OCI-LY7 (cell line): ENCODE measurements at regions of chr6 and their contacts with region 1.

Region 1: DNA sequence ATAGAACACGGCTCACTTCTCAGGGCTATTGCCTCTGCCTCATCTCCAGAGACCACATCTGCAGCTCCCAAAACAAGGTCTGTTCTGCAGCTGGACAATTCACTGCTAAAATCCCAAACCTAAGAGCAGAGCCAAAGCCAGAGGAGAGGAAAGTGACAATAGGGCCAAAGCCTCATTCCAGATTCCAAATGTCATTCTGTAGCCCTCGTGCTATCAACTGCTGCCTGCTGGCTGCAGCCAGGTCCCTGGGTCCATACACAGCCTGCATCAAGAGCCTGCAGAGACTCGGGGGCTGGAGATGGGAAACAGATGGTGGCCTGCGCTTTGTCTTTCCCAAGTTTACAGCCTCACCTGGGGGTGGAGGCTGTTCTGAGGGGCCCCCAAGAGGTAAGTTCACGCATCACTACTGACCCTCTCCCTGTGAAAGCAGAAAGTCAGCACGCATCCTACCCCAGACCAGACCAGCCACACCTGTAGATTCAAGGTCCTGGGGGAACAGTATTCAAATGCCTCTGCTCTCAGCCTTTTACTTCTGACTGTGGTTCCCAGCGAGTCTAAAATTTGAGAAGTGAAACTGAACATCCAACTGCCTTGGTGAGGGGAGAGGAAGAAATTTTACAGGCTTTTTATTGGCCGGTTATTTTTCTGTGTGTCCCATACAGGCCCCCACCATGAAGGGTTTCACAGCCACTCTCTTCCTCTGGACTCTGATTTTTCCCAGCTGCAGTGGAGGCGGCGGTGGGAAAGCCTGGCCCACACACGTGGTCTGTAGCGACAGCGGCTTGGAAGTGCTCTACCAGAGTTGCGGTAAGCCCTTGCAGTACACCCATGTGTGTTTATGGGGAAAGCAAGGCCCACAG is at the start of gene LY86:
- DNase-seq: peak; percentile 94
- H3K4me3 ChIP-seq: peak within 1 kb of the TSS; percentile 76
- H3K27ac ChIP-seq: peak within 1 kb of the TSS; percentile 96
- H3K4me1 ChIP-seq: peaks cover 78% of the 10 kb centered on the region
- CTCF ChIP-seq: peak; percentile 68
- total RNA-seq, gene LY86: 48.4 and 49.2 TPM in 2 replicates

Region 2: DNA sequence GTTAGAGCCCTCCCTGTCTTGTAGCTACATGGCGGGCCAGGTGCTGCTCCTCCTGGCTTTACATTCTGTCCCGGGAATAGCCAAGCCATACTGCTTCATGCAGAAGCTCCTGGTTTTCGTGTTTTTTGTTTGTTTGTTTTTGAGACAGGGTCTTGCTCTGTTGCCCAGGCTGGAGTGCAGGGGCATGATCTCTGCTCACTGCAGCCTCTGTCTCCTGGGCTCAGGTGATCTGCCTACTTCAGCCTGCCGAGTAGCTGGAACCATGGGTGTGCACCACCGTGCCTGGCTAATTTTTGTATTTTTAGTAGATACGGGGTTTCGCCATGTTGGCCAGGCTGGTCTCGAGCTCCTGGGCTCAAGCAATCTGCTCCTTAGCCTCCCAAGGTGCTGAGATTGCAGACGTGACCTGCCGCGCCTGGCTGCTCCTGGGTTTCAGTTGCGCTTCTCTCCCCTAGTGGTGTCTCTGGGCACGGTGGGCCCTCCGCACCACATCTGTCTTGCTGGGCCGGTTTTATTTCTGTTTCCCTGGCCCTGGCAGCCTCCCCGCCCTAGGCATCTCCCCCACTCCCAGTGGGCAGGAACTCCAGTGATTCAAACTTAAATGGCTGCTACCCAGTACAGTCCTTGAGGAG is 1799.2 kb before region 1 on chr6:
- CTCF ChIA-PET with region 1: no interaction called
- POLR2A ChIA-PET with region 1: no interaction called
- intact Hi-C with region 1: loop called (anchors 10 kb)
- DNase-seq: peak; percentile 79
- H3K4me3 ChIP-seq: peak overlapping the region; percentile 27
- H3K27ac ChIP-seq: peak overlapping the region; percentile 33
- H3K4me1 ChIP-seq: peaks cover 24% of the 10 kb centered on the region
- CTCF ChIP-seq: peak; percentile 60

Region 3: GRCh38 chr6:6331946-6332601 is 256.2 kb before region 1 on chr6:
- CTCF ChIA-PET with region 1: no interaction called
- POLR2A ChIA-PET with region 1: no interaction called
- intact Hi-C with region 1: loop called (anchors 2 kb)
- DNase-seq: peak; percentile 94
- H3K4me3 ChIP-seq: peak overlapping the region; percentile 64
- H3K27ac ChIP-seq: peak overlapping the region; percentile 97
- H3K4me1 ChIP-seq: peaks cover 77% of the 10 kb centered on the region
- CTCF ChIP-seq: no peak

Region 4: DNA sequence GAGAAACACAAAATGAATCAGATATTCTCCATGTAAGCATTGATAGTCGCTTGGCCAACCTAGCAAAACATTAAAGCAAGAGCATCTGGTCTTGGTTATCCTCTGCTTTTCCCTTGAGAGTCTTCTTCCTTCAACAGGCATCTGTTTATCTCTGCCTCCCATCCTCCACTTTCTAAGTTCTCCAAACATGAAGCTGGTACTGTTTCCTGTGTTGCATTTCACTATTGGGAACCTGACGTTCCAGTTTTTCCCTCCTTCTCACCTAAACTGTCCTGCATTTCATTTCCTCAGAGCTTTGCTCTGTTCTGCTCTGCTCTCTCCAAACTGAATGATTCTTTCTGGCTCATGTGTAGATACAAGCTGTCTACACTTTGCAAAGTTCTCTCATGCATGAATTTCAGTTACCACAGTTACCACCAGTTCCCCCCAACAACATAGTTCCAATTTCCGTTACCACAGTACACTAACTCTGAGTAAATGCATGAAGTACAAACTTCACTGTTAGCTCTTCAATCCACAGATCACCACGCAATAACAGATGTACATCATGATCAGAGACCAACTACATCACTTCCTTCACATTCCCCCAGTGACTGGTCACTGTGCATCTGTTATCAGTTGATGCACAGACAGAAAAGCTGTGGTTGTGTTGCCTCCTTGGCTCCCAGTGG is 181.1 kb before region 1 on chr6:
- CTCF ChIA-PET with region 1: interaction called, 3 read pairs
- POLR2A ChIA-PET with region 1: interaction called, 11 read pairs
- intact Hi-C with region 1: loop called (anchors 5 kb)
- DNase-seq: peak; percentile 92
- H3K4me3 ChIP-seq: peak overlapping the region; percentile 54
- H3K27ac ChIP-seq: peak overlapping the region; percentile 94
- H3K4me1 ChIP-seq: peaks cover 85% of the 10 kb centered on the region
- CTCF ChIP-seq: no peak

Region 5: DNA sequence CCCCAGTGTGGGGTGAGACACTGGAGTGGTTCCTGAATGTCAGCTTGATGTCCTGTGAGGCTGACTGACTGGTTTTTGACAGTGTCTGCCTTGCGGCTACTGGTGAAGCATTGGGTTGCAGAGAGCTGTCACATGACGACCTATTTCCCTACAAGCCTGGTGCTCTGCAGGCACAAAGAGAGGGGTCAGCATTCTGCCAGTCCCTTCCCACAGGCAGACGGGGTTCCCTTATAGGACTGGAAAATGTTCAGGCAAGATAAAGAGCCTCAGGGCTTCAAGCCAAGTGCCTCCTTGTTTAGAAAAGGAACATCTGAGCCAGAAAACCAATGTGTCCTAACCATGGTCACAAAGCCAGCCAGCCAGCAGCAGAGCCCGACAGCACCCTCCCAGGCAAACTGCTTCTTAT is 11.2 kb after region 1 on chr6:
- CTCF ChIA-PET with region 1: no interaction called
- POLR2A ChIA-PET with region 1: interaction called, 14 read pairs
- intact Hi-C with region 1: no loop called
- DNase-seq: no peak
- H3K4me3 ChIP-seq: no peak overlapping the region
- H3K27ac ChIP-seq: no peak overlapping the region
- H3K4me1 ChIP-seq: peaks cover 4% of the 10 kb centered on the region
- CTCF ChIP-seq: no peak

Region 6: GRCh38 chr6:6610031-6610591 is 21.8 kb after region 1 on chr6:
- CTCF ChIA-PET with region 1: interaction called, 6 read pairs
- POLR2A ChIA-PET with region 1: interaction called, 84 read pairs
- intact Hi-C with region 1: loop called (anchors 1 kb)
- DNase-seq: peak; percentile 85
- H3K4me3 ChIP-seq: peak overlapping the region; percentile 36
- H3K27ac ChIP-seq: peak overlapping the region; percentile 72
- H3K4me1 ChIP-seq: peaks cover 31% of the 10 kb centered on the region
- CTCF ChIP-seq: no peak

Region 7: GRCh38 chr6:7389451-7390225 is 801.3 kb after region 1 on chr6 and contains the starts of genes CAGE1 and RIOK1:
- CTCF ChIA-PET with region 1: no interaction called
- POLR2A ChIA-PET with region 1: no interaction called
- intact Hi-C with region 1: loop called (anchors 5 kb)
- DNase-seq: peak; percentile 94
- H3K4me3 ChIP-seq: peak within 1 kb of the TSS; percentile 83
- H3K27ac ChIP-seq: peak within 1 kb of the TSS; percentile 84
- H3K4me1 ChIP-seq: peaks cover 21% of the 10 kb centered on the region
- CTCF ChIP-seq: no peak
- total RNA-seq, gene CAGE1: 0.44 and 1.1 TPM in 2 replicates
- total RNA-seq, gene RIOK1: 55.0 and 85.0 TPM in 2 replicates